BJ (cell line): ENCODE measurements at regions of chr3 and their contacts with region 1.

Region 1: DNA sequence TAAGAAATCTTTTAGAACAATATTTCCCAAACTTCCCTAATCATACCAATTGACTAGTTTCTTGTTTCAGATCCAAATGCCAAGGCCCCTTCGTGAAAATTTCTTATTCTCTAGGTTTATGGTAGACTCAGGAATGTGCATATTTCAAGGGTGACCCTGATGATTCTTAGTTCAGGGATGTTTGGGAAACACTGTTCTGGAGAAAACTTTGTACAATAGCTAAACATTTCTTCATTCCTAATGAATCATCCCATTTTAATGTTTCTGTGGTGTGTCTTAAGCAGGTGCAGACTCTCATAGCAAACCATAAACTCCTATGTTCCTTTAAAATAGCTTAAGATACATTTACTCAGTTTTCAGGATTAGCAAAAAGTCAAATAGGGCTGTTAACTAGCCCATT is 314.5 kb downstream of the TIGIT start:
- DNase-seq: peak; percentile 90
- H3K4me3 ChIP-seq: no peak overlapping the region
- H3K27me3 ChIP-seq: no peaks in the 10 kb centered on the region
- CTCF ChIP-seq: no peak

Region 2: GRCh38 chr3:115146431-115147328 is 538.4 kb after region 1 on chr3 and contains the start of gene ZBTB20:
- CTCF ChIA-PET with region 1: no interaction called
- POLR2A ChIA-PET with region 1: interaction called, 19 read pairs
- DNase-seq: no peak
- H3K4me3 ChIP-seq: peak within 1 kb of the TSS; percentile 81
- H3K27me3 ChIP-seq: no peaks in the 10 kb centered on the region
- CTCF ChIP-seq: no peak
- polyA plus RNA-seq, gene ZBTB20: 4.7 and 6.0 TPM in 2 replicates